Testis (tissue), 5 donors: ENCODE measurements at regions of chr4 and their contacts with region 1.

Region 1: GRCh38 chr4:112942077-112942476 is 107.4 kb upstream of the ANK2 start:
- DNase-seq: no peak
- H3K4me3 ChIP-seq: no peak overlapping the region
- H3K27ac ChIP-seq: no peak overlapping the region
- H3K4me1 ChIP-seq: no peaks in the 10 kb centered on the region
- H3K27me3 ChIP-seq: no peaks in the 10 kb centered on the region
- CTCF ChIP-seq: no peak
- POLR2A ChIP-seq: no peak

Region 2: GRCh38 chr4:112636688-112637551 is 305.2 kb before region 1 on chr4 and contains the starts of genes LARP7 and ZGRF1:
- intact Hi-C with region 1: loop called (anchors 10 kb)
- DNase-seq: peak; percentile 100
- H3K4me3 ChIP-seq: peak within 1 kb of the TSS; percentile 58 to 89
- H3K27ac ChIP-seq: peak within 1 kb of the TSS; percentile 97 to 99
- H3K4me1 ChIP-seq: peaks cover 8% of the 10 kb centered on the region
- H3K27me3 ChIP-seq: no peaks in the 10 kb centered on the region
- CTCF ChIP-seq: peak; percentile 98 to 99 (median 98)
- POLR2A ChIP-seq: no peak
- total RNA-seq, gene LARP7: 40.6 to 41.7 TPM
- total RNA-seq, gene ZGRF1: 16.9 to 25.7 TPM

Region 3: GRCh38 chr4:112648263-112649054 is 293.6 kb before region 1 on chr4:
- intact Hi-C with region 1: no loop called
- DNase-seq: no peak
- H3K4me3 ChIP-seq: no peak overlapping the region
- H3K27ac ChIP-seq: no peak overlapping the region
- H3K4me1 ChIP-seq: no peaks in the 10 kb centered on the region
- H3K27me3 ChIP-seq: no peaks in the 10 kb centered on the region
- CTCF ChIP-seq: no peak
- POLR2A ChIP-seq: no peak

Region 4: GRCh38 chr4:112765317-112765975 is 176.6 kb before region 1 on chr4:
- intact Hi-C with region 1: loop called (anchors 10 kb)
- DNase-seq: no peak
- H3K4me3 ChIP-seq: no peak overlapping the region
- H3K27ac ChIP-seq: no peak overlapping the region
- H3K4me1 ChIP-seq: peaks cover 2% of the 10 kb centered on the region
- H3K27me3 ChIP-seq: no peaks in the 10 kb centered on the region
- CTCF ChIP-seq: peak; percentile 31 to 55 (median 45)
- POLR2A ChIP-seq: no peak